ENCODE measurements at regions of chr2 and their contacts with region 1.

Region 1: DNA sequence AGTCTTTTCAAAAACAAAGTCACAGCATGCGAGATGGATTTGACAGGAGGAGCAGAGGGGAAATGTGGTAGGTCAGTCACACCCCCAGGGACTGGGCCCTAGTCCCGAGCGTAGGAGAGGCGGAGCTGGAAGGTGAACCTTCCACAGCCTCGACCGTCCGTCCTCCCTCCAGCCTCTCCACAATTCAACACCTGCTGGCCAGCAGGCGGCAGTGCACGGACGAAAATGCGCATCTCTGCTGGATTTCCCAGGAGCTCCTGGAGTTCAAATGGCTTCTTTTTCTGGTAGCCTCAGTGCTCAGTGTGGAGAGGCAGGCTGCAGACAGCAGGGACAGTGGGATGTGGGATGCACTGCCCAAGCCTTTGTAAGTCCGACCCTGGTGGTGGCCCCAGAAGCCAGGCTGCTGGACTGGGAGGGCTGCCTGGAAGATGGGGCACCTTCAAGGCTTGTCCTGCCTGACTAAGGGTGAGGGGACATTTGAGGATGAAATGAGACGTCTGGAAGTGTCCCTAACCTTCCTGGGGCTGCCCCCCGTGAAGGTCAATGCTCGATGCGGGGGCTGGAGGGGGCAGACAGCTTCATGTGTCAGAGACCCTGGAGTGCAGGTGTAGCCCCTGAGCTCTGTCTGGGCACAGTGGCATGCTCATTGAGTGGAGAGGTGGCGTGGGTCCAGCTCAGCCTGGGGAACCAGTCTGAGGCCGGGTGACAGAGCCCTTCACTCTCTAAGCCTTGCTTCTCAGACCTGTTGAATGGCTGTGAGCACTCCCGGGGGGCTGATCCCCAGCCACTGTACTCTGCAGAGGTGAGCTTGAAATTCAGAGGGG is 189.5 kb downstream of the TFCP2L1 start:
- DNase-seq: peak; percentile 69
- H3K4me3 ChIP-seq: no peak overlapping the region
- H3K27ac ChIP-seq: no peak overlapping the region
- H3K4me1 ChIP-seq: peaks cover 0 to 23% (median 12%) of the 10 kb centered on the region in 4 donors
- H3K27me3 ChIP-seq: no peaks in the 10 kb centered on the region
- CTCF ChIP-seq: peak in 3 of 4 experiments; percentile 39 to 47 (median 43)
- EP300 ChIP-seq: no peak
- POLR2A ChIP-seq: no peak

Region 2: GRCh38 chr2:121112587-121112986 is 17.1 kb after region 1 on chr2:
- intact Hi-C with region 1: no loop called
- DNase-seq: no peak
- H3K4me3 ChIP-seq: no peak overlapping the region
- H3K27ac ChIP-seq: no peak overlapping the region
- H3K4me1 ChIP-seq: no peaks in the 10 kb centered on the region
- H3K27me3 ChIP-seq: no peaks in the 10 kb centered on the region
- CTCF ChIP-seq: no peak
- EP300 ChIP-seq: no peak
- POLR2A ChIP-seq: no peak

Region 3: DNA sequence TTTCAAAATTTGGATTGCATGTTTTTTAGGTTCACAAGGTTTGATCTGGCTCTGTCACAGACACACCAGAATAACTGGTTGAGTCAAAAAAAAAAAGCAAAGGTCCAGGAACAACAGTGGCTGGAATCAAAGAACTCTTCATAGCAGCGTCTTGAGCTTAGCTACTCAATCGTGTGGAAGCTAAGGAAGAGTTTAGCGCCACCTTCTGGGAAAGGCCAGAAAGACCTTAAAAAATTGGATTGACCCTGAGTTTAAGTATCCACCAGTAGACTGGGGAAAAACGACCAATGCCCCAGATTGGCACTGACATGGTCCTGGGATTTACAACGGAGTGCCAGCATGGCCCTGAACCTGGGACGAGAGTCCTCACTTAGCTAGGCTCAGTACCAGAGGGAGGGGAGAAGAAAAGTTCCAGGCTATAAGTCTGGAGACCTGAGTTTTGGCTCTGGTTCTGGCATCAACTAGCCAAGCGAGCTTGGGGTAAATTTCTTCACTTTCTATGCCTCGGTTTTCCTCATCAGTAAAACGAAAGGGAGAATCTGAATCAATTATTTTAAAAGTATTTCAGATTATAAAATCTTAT is 260.7 kb after region 1 on chr2:
- intact Hi-C with region 1: loop called (anchors 5 kb)
- DNase-seq: peak; percentile 55
- H3K4me3 ChIP-seq: no peak overlapping the region
- H3K27ac ChIP-seq: no peak overlapping the region
- H3K4me1 ChIP-seq: peaks cover 0 to 12% (median 10%) of the 10 kb centered on the region in 4 donors
- H3K27me3 ChIP-seq: no peaks in the 10 kb centered on the region
- CTCF ChIP-seq: peak in 3 of 4 experiments; percentile 49 to 60 (median 53)
- EP300 ChIP-seq: no peak
- POLR2A ChIP-seq: no peak

Measured in sigmoid colon (tissue), 7 donors.